GM12878 (cell line): ENCODE measurements at regions of chr1 and their contacts with region 1.

Region 1: GRCh38 chr1:160006312-160006940 is 25.4 kb downstream of the PIGM start:
- DNase-seq: no peak
- ATAC-seq: peak; percentile 98
- H3K4me3 ChIP-seq: no peak overlapping the region
- H3K27ac ChIP-seq: no peak overlapping the region
- H3K4me1 ChIP-seq: no peaks in the 10 kb centered on the region
- H3K27me3 ChIP-seq: no peaks in the 10 kb centered on the region; a peak in 1 of 4 replicates
- CTCF ChIP-seq: peak; percentile 84 to 94 (median 94)
- EP300 ChIP-seq: no peak
- POLR2A ChIP-seq: no peak
- RAD21 ChIP-seq: peak; percentile 70

Region 2: GRCh38 chr1:159421821-159422220 is 584.6 kb before region 1 on chr1:
- CTCF ChIA-PET with region 1: no interaction called
- POLR2A ChIA-PET with region 1: no interaction called
- RAD21 ChIA-PET with region 1: no interaction called
- SMC1A ChIA-PET with region 1: no interaction called
- in situ Hi-C with region 1: no loop called
- intact Hi-C with region 1: loop called (anchors 5 kb)
- DNase-seq: no peak
- ATAC-seq: peak; percentile 38; the same call in 1 of the 3 replicates
- H3K4me3 ChIP-seq: no peak overlapping the region
- H3K27ac ChIP-seq: no peak overlapping the region
- H3K4me1 ChIP-seq: no peaks in the 10 kb centered on the region
- H3K27me3 ChIP-seq: no peaks in the 10 kb centered on the region
- CTCF ChIP-seq: peak in 2 of 3 experiments; percentile 21 to 29; a peak in 3 of 6 replicates
- EP300 ChIP-seq: no peak
- POLR2A ChIP-seq: no peak
- RAD21 ChIP-seq: no peak

Region 3: GRCh38 chr1:159867683-159868064 is 138.8 kb before region 1 on chr1:
- CTCF ChIA-PET with region 1: no interaction called
- POLR2A ChIA-PET with region 1: no interaction called
- RAD21 ChIA-PET with region 1: no interaction called
- SMC1A ChIA-PET with region 1: no interaction called
- in situ Hi-C with region 1: no loop called
- intact Hi-C with region 1: no loop called
- DNase-seq: no peak
- ATAC-seq: no peak
- H3K4me3 ChIP-seq: no peak overlapping the region
- H3K27ac ChIP-seq: no peak overlapping the region
- H3K4me1 ChIP-seq: no peaks in the 10 kb centered on the region
- H3K27me3 ChIP-seq: no peaks in the 10 kb centered on the region; a peak in 2 of 4 replicates
- CTCF ChIP-seq: no peak
- EP300 ChIP-seq: no peak
- POLR2A ChIP-seq: no peak
- RAD21 ChIP-seq: no peak

Region 4: GRCh38 chr1:159881930-159882839 is 124.2 kb before region 1 on chr1:
- CTCF ChIA-PET with region 1: interaction called, 10 read pairs
- POLR2A ChIA-PET with region 1: no interaction called
- RAD21 ChIA-PET with region 1: interaction called, 4 read pairs
- SMC1A ChIA-PET with region 1: interaction called, 6 read pairs
- in situ Hi-C with region 1: no loop called
- intact Hi-C with region 1: no loop called
- DNase-seq: no peak
- ATAC-seq: no peak
- H3K4me3 ChIP-seq: no peak overlapping the region
- H3K27ac ChIP-seq: no peak overlapping the region
- H3K4me1 ChIP-seq: peaks cover under 1% of the 10 kb centered on the region; the same call in 1 of the 2 replicates
- H3K27me3 ChIP-seq: no peaks in the 10 kb centered on the region
- CTCF ChIP-seq: no peak
- EP300 ChIP-seq: no peak
- POLR2A ChIP-seq: no peak
- RAD21 ChIP-seq: no peak

Region 5: GRCh38 chr1:159945483-159946241 is 60.8 kb before region 1 on chr1 and contains the start of gene IGSF9:
- CTCF ChIA-PET with region 1: interaction called, 422 read pairs
- POLR2A ChIA-PET with region 1: no interaction called
- RAD21 ChIA-PET with region 1: interaction called, 113 read pairs
- SMC1A ChIA-PET with region 1: interaction called, 6 read pairs
- in situ Hi-C with region 1: no loop called
- intact Hi-C with region 1: no loop called
- DNase-seq: no peak
- ATAC-seq: peak; percentile 78
- H3K4me3 ChIP-seq: no peak within 1 kb of the TSS
- H3K27ac ChIP-seq: no peak within 1 kb of the TSS
- H3K4me1 ChIP-seq: no peaks in the 10 kb centered on the region; the same call in 1 of the 2 replicates
- H3K27me3 ChIP-seq: peaks cover 6 to 26% of the 10 kb centered on the region in 2 experiments
- CTCF ChIP-seq: peak; percentile 12 to 38 (median 18); a peak in 4 of 6 replicates
- EP300 ChIP-seq: no peak
- POLR2A ChIP-seq: no peak
- RAD21 ChIP-seq: peak; percentile 22; the same call in 1 of the 2 replicates
- polyA plus RNA-seq, gene IGSF9: not detected

Region 6: GRCh38 chr1:160018900-160019299 is 12.5 kb after region 1 on chr1:
- CTCF ChIA-PET with region 1: interaction called, 52 read pairs
- POLR2A ChIA-PET with region 1: no interaction called
- RAD21 ChIA-PET with region 1: interaction called, 4 read pairs
- SMC1A ChIA-PET with region 1: interaction called, 12 read pairs
- in situ Hi-C with region 1: no loop called
- intact Hi-C with region 1: no loop called
- DNase-seq: no peak
- ATAC-seq: no peak
- H3K4me3 ChIP-seq: no peak overlapping the region
- H3K27ac ChIP-seq: no peak overlapping the region
- H3K4me1 ChIP-seq: no peaks in the 10 kb centered on the region
- H3K27me3 ChIP-seq: no peaks in the 10 kb centered on the region; a peak in 2 of 4 replicates
- CTCF ChIP-seq: no peak
- EP300 ChIP-seq: no peak
- POLR2A ChIP-seq: no peak
- RAD21 ChIP-seq: no peak